Transverse colon (tissue), 4 donors: ENCODE measurements at regions of chr14 and their contacts with region 1.

Region 1: DNA sequence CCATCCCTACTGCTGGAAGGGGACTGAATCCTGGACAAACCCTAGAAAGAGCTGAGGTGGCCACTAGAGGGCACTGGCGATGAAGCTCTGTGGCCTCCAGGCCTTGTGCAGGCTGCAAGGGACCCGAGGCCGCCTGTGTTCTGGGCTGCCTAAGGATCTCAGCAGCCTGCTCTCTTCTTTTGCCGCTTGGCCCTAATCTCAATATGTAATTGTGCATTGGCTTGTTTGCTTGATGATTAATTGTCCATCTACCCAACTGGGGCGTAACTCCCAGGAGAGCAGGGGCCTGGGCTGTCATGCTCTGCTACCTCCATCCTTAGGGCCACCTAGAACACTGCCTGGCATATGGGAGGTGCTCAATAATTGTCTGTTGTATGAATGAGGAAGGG is 73.8 kb downstream of the SYNE3 start:
- DNase-seq: peak; percentile 87
- H3K4me3 ChIP-seq: no peak overlapping the region
- H3K27ac ChIP-seq: no peak overlapping the region
- H3K4me1 ChIP-seq: peaks cover 0 to 22% (median 6%) of the 10 kb centered on the region in 4 donors
- H3K27me3 ChIP-seq: no peaks in the 10 kb centered on the region
- CTCF ChIP-seq: peak; percentile 79 to 89 (median 85)
- EP300 ChIP-seq: no peak
- POLR2A ChIP-seq: no peak

Region 2: DNA sequence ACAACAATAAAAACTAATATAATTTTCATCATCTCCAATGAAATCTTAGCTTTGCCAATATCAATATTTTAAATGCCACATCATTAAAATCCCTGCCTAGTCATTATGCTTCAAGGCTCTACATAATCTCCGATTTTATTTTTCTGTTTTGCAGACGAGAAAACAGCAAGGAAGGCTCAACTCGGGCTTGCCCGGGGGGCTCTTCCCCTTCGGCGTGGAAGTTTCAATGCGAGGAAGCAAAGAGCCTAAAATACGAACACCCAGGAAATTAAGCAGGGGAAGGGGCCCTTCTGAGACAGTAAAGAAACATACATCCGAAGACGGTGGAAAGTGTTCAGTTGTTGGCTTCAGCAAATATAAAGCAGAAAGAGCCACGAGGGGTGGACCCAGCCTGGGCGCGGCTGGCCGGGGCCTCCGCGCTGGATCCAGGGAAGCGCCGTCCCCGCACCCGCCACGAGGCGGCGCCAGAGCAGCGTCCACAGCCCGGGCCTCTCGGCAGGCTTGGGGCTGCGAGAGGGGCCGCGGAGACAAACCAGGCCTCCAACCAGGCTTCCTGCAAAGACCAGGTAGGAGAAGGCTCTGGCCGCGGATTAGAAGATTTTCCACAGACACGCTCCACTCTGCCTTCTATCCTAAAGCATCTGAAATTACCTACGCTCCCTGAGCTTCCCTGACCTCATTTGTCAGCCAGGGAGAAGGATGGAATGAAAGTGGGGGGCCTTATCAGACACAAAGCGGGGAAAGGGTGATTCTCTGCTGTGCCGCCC is 753.2 kb before region 1 on chr14:
- in situ Hi-C with region 1: loop called (anchors 10 to 25 kb)
- intact Hi-C with region 1: no loop called
- DNase-seq: peak; percentile 50
- H3K4me3 ChIP-seq: peak overlapping the region in 1 of 4 donors; percentile 24
- H3K27ac ChIP-seq: no peak overlapping the region
- H3K4me1 ChIP-seq: peaks cover 0 to 8% (median 3%) of the 10 kb centered on the region in 4 donors
- H3K27me3 ChIP-seq: peaks cover 9% of the 10 kb centered on the region
- CTCF ChIP-seq: peak; percentile 88 to 97 (median 95)
- EP300 ChIP-seq: no peak
- POLR2A ChIP-seq: no peak

Region 3: GRCh38 chr14:95134304-95134933 is 308.2 kb before region 1 on chr14:
- in situ Hi-C with region 1: no loop called
- intact Hi-C with region 1: no loop called
- DNase-seq: no peak
- H3K4me3 ChIP-seq: no peak overlapping the region
- H3K27ac ChIP-seq: peak overlapping the region in 2 of 4 donors; percentile 7 to 14
- H3K4me1 ChIP-seq: peaks cover 0 to 53% (median 29%) of the 10 kb centered on the region in 4 donors
- H3K27me3 ChIP-seq: no peaks in the 10 kb centered on the region
- CTCF ChIP-seq: no peak
- EP300 ChIP-seq: no peak
- POLR2A ChIP-seq: no peak

Region 4: DNA sequence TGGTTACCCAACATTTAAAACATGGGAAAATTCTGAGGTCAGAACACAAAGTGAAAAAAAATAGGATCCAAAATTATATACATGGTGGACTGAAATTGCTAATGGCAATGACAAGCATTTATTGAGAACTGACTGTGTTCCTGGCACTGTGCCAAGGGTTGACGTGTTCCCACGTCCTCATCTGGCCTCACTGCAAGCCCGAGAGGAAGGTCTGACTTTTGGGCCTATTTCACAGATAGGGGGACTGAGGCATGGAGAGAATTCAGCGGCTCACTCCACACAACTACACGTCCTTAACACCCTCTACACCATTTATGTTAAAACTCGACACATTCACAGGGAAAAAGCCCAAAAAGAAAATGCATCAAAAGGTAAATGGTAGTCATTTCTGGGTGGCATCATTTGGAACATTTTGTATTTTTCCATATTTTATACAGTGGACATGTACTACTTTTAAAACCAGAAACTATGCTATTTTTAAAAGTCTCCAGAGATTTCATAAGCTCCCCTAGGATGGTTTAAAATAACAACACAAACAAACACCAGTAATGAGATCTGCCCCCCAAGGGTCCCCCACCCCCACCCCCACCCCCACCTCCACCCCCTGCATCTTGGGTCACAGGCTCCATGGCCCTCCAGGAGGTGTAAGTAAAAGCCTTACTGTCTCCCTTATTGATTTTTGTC is 150.6 kb before region 1 on chr14:
- in situ Hi-C with region 1: no loop called
- intact Hi-C with region 1: no loop called
- DNase-seq: peak; percentile 68
- H3K4me3 ChIP-seq: peak overlapping the region in 1 of 4 donors; percentile 16
- H3K27ac ChIP-seq: peak overlapping the region; percentile 67 to 79 (median 68)
- H3K4me1 ChIP-seq: peaks cover 8 to 43% (median 12%) of the 10 kb centered on the region in 4 donors
- H3K27me3 ChIP-seq: no peaks in the 10 kb centered on the region
- CTCF ChIP-seq: no peak
- EP300 ChIP-seq: no peak
- POLR2A ChIP-seq: no peak

Region 5: GRCh38 chr14:95472819-95473251 is 30.2 kb after region 1 on chr14:
- in situ Hi-C with region 1: no loop called
- intact Hi-C with region 1: loop called (anchors 2 kb)
- DNase-seq: no peak
- H3K4me3 ChIP-seq: no peak overlapping the region
- H3K27ac ChIP-seq: no peak overlapping the region
- H3K4me1 ChIP-seq: peaks cover 10 to 27% (median 17%) of the 10 kb centered on the region in 4 donors
- H3K27me3 ChIP-seq: no peaks in the 10 kb centered on the region
- CTCF ChIP-seq: no peak
- EP300 ChIP-seq: no peak
- POLR2A ChIP-seq: no peak

Region 6: DNA sequence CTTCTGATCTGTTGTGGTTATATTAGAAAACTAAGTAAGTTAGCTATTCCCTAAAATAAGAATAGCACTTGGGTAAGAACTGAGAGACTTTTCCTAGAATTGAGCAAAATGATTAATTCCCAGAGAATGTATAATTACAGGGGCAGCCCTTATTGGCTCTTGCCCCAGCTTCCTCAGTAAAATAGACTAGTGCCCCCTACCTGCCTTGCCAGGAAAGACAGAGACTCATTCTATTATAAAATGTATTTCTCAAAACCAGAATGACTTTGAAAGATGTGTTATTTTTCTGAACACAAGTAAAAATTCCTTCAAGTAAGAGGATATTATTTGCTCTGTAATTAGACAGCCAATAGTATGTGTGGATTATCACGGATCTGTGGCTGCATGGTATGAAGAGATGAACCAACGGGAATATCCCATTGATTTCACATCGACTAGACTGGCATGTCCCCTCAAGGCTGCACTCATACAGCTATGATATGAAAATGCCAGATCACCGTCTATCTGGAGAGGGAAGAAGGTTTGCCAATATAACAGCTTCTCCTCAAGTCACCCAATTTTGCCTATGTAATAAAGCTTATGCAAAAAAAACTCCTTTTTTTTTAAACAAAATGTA is 84.9 kb after region 1 on chr14:
- in situ Hi-C with region 1: loop called (anchors 5 to 10 kb)
- intact Hi-C with region 1: loop called (anchors 5 kb)
- DNase-seq: peak; percentile 65
- H3K4me3 ChIP-seq: no peak overlapping the region
- H3K27ac ChIP-seq: peak overlapping the region; percentile 39 to 56 (median 44)
- H3K4me1 ChIP-seq: peaks cover 14 to 60% (median 24%) of the 10 kb centered on the region in 4 donors
- H3K27me3 ChIP-seq: no peaks in the 10 kb centered on the region
- CTCF ChIP-seq: peak; percentile 78 to 85 (median 80)
- EP300 ChIP-seq: no peak
- POLR2A ChIP-seq: no peak

Region 7: GRCh38 chr14:95534299-95535225 is 91.9 kb after region 1 on chr14 and contains the start of gene GLRX5:
- in situ Hi-C with region 1: loop called (anchors 5 to 10 kb)
- intact Hi-C with region 1: loop called (anchors 5 kb)
- DNase-seq: peak; percentile 99
- H3K4me3 ChIP-seq: peak within 1 kb of the TSS; percentile 90 to 99 (median 96)
- H3K27ac ChIP-seq: peak within 1 kb of the TSS; percentile 94 to 98 (median 96)
- H3K4me1 ChIP-seq: peaks cover 21 to 58% (median 39%) of the 10 kb centered on the region in 4 donors
- H3K27me3 ChIP-seq: no peaks in the 10 kb centered on the region
- CTCF ChIP-seq: no peak
- EP300 ChIP-seq: no peak
- POLR2A ChIP-seq: peak; percentile 64
- total RNA-seq, gene GLRX5: 11.6 to 177 (median 38.2) TPM

Region 8: GRCh38 chr14:95993768-95994592 is 551.4 kb after region 1 on chr14:
- in situ Hi-C with region 1: loop called in 1 of 4 experiments (anchors 25 kb)
- intact Hi-C with region 1: no loop called
- DNase-seq: no peak
- H3K4me3 ChIP-seq: no peak overlapping the region
- H3K27ac ChIP-seq: no peak overlapping the region
- H3K4me1 ChIP-seq: no peaks in the 10 kb centered on the region
- H3K27me3 ChIP-seq: peaks cover 19% of the 10 kb centered on the region
- CTCF ChIP-seq: peak; percentile 64 to 75 (median 70)
- EP300 ChIP-seq: no peak
- POLR2A ChIP-seq: no peak